ENCODE measurements at regions of chr2 and their contacts with region 1.

Region 1: GRCh38 chr2:173903601-173904394 is 61.4 kb downstream of the SP3 start:
- H3K4me3 Mint-ChIP-seq: no peak overlapping the region
- H3K27ac Mint-ChIP-seq: no peak overlapping the region
- H3K4me1 Mint-ChIP-seq: peaks cover 12% of the 10 kb centered on the region
- H3K27me3 Mint-ChIP-seq: no peaks in the 10 kb centered on the region

Region 2: GRCh38 chr2:173427887-173428600 is 475.8 kb before region 1 on chr2:
- intact Hi-C with region 1: no loop called
- H3K4me3 Mint-ChIP-seq: no peak overlapping the region
- H3K27ac Mint-ChIP-seq: no peak overlapping the region
- H3K4me1 Mint-ChIP-seq: peaks cover 8% of the 10 kb centered on the region
- H3K27me3 Mint-ChIP-seq: peaks cover 5% of the 10 kb centered on the region

Region 3: DNA sequence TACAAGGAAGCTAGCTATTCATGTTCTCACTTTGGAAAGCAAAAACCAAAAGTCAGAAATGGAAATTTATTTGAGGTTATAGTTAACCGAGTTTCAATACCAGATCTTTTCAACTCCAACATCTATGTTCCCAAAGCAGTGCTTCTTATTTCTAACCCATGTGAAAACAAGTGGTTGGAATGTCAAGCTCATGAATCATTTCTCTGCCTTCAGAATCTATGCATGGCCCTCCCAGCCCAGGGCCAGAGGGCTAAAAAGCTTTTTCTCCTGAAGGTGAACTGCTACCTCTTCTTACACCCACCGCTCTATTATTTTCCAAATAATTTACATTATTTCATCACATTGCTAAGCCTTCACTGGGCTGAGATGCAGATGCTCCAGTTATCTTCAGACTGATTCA is 97.0 kb before region 1 on chr2:
- intact Hi-C with region 1: no loop called
- H3K4me3 Mint-ChIP-seq: no peak overlapping the region
- H3K27ac Mint-ChIP-seq: no peak overlapping the region
- H3K4me1 Mint-ChIP-seq: no peaks in the 10 kb centered on the region
- H3K27me3 Mint-ChIP-seq: no peaks in the 10 kb centered on the region

Region 4: DNA sequence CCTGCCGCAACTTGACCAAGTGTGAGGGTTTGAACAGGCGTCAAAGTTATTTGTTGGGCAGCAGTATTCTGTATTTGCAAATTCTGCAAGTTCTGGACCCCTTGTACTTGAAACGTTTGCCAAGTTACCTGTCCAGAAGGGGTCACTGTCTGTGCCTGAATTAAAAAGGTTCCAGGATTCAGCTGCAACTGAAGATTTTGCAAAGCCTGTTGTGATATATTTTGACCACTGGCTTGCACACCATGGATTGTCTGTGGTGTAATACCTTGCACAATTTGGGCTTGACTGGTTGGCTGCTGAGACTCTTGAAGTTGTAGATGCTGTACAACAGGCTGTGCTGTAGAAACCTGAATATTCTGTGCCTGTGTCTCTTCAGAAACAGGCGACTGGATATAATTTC is 51.2 kb after region 1 on chr2:
- intact Hi-C with region 1: loop called (anchors 10 kb)
- H3K4me3 Mint-ChIP-seq: no peak overlapping the region
- H3K27ac Mint-ChIP-seq: no peak overlapping the region
- H3K4me1 Mint-ChIP-seq: peaks cover 70% of the 10 kb centered on the region
- H3K27me3 Mint-ChIP-seq: no peaks in the 10 kb centered on the region